ENCODE measurements at regions of chr20 and their contacts with region 1.

Region 1: GRCh38 chr20:17504898-17505635 is 26.1 kb downstream of the BFSP1 start:
- DNase-seq: peak; percentile 67
- H3K4me3 Mint-ChIP-seq: peak overlapping the region; percentile 80
- H3K27ac Mint-ChIP-seq: peak overlapping the region; percentile 66
- H3K4me1 Mint-ChIP-seq: peaks cover 35% of the 10 kb centered on the region
- H3K27me3 Mint-ChIP-seq: no peaks in the 10 kb centered on the region

Region 2: DNA sequence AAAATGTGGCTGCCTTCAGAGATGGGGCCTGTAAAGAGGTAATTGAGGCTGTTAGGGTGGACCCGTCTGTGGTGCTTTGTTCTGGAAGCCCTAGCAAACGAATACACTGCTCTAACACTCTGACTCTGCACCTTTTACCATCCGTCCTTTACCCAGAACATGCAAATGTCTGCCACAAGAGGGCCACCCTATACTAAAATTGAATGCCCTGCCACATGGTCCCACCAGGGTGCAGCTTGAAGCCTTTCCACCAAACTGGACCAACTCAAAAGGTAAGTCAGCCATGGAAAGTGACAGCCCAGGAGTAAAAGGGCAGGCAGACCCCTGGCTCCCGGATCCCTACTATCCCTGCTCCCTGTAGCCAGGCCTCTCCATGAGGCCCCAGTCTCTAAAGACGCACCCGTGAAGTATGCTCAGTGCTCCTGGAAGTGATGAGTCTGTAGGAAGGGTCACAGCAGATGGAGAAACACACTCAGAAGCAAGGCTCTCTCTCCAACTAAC is 31.9 kb after region 1 on chr20:
- CTCF ChIA-PET with region 1: interaction called, 18 read pairs
- POLR2A ChIA-PET with region 1: no interaction called
- intact Hi-C with region 1: no loop called
- DNase-seq: peak; percentile 78
- H3K4me3 Mint-ChIP-seq: no peak overlapping the region
- H3K27ac Mint-ChIP-seq: peak overlapping the region; percentile 28
- H3K4me1 Mint-ChIP-seq: peaks cover 16% of the 10 kb centered on the region
- H3K27me3 Mint-ChIP-seq: peaks cover 9% of the 10 kb centered on the region

Region 3: GRCh38 chr20:17611540-17612286 is 106.6 kb after region 1 on chr20:
- CTCF ChIA-PET with region 1: interaction called, 27 read pairs
- POLR2A ChIA-PET with region 1: interaction called, 3 read pairs
- intact Hi-C with region 1: loop called (anchors 1 kb)
- DNase-seq: peak; percentile 12
- H3K4me3 Mint-ChIP-seq: peak overlapping the region; percentile 57
- H3K27ac Mint-ChIP-seq: peak overlapping the region; percentile 89
- H3K4me1 Mint-ChIP-seq: peaks cover 38% of the 10 kb centered on the region
- H3K27me3 Mint-ChIP-seq: no peaks in the 10 kb centered on the region

Region 4: GRCh38 chr20:17682103-17682888 is 177.2 kb after region 1 on chr20 and contains the start of gene RRBP1:
- CTCF ChIA-PET with region 1: interaction called, 28 read pairs
- POLR2A ChIA-PET with region 1: interaction called, 3 read pairs
- intact Hi-C with region 1: loop called (anchors 1 kb)
- DNase-seq: peak; percentile 98
- H3K4me3 Mint-ChIP-seq: peak within 1 kb of the TSS; percentile 81
- H3K27ac Mint-ChIP-seq: peak within 1 kb of the TSS; percentile 79
- H3K4me1 Mint-ChIP-seq: peaks cover 18% of the 10 kb centered on the region
- H3K27me3 Mint-ChIP-seq: peaks cover 23% of the 10 kb centered on the region
- total RNA-seq, gene RRBP1: 29.6 to 32.0 TPM

Region 5: GRCh38 chr20:17995967-17996819 is 491.1 kb after region 1 on chr20:
- CTCF ChIA-PET with region 1: interaction called, 9 read pairs
- POLR2A ChIA-PET with region 1: no interaction called
- intact Hi-C with region 1: loop called (anchors 1 kb)
- DNase-seq: peak; percentile 55
- H3K4me3 Mint-ChIP-seq: no peak overlapping the region
- H3K27ac Mint-ChIP-seq: no peak overlapping the region
- H3K4me1 Mint-ChIP-seq: peaks cover 28% of the 10 kb centered on the region
- H3K27me3 Mint-ChIP-seq: peaks cover 3% of the 10 kb centered on the region

Region 6: GRCh38 chr20:18507218-18508021 is 1002.4 kb after region 1 on chr20 and contains the start of gene SEC23B:
- CTCF ChIA-PET with region 1: no interaction called
- POLR2A ChIA-PET with region 1: no interaction called
- intact Hi-C with region 1: loop called (anchors 2 kb)
- DNase-seq: peak; percentile 99
- H3K4me3 Mint-ChIP-seq: peak within 1 kb of the TSS; percentile 96
- H3K27ac Mint-ChIP-seq: peak within 1 kb of the TSS; percentile 97
- H3K4me1 Mint-ChIP-seq: peaks cover 40% of the 10 kb centered on the region
- H3K27me3 Mint-ChIP-seq: no peaks in the 10 kb centered on the region
- total RNA-seq, gene SEC23B: 90.6 to 97.1 TPM

Measured in activated CD4-positive, alpha-beta memory T cell treated with anti-CD3 and anti-CD28 coated beads for 36 hours (primary cell).